ENCODE measurements at regions of chr11 and their contacts with region 1.

Region 1: DNA sequence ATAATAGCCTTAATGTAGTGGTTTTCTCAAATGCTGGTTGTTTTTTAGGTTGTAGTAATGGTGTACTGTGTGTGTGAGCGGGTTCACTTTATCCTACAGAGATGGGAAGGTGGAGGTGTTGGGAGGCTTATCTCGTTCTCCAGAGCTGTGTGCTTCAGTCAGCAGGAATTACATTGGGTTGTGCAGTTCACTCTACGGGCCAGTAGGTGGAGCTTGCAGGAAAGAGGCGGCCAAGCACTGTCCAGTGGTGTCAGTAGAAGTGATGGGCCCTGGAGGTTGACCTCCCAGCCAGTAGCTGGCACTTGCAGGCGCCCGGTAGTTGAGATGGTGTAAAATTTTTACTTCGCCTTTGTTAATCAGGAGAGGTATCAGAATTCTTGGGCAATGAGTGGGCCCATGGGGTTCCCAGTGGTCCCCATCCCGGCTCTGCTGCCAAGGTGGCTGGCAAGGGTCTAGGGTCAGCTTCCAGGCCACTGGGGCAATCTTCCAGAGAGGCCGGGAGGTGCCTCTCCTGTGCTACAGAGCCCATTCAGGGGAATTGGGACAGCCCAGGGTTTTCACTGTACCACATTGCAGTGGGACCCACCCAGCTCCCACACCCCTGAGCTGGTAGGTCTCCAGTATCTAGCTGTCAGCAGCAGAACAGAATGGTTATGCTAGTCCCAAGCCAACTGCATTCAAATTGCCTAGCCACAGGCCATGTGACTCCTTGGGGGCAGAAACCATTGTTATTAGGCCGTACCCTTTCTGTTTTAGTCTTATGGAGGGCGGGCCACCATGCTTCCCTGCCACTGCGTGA is 43.9 kb downstream of the BIRC2 start:
- DNase-seq: peak; percentile 44 to 56 (median 53)
- H3K4me3 ChIP-seq: no peak overlapping the region
- H3K4me3 Mint-ChIP-seq: no peak overlapping the region
- H3K27ac ChIP-seq: no peak overlapping the region
- H3K27ac Mint-ChIP-seq: peak overlapping the region in 6 of 7 donors; percentile 15 to 83 (median 65)
- H3K4me1 ChIP-seq: peaks cover 11% of the 10 kb centered on the region
- H3K4me1 Mint-ChIP-seq: peaks cover 17 to 40% (median 21%) of the 10 kb centered on the region in 4 donors
- H3K27me3 ChIP-seq: no peaks in the 10 kb centered on the region
- H3K27me3 Mint-ChIP-seq: no peaks in the 10 kb centered on the region

Region 2: GRCh38 chr11:102341844-102342318 is 49.0 kb before region 1 on chr11:
- CTCF ChIA-PET with region 1: interaction called, 84 read pairs
- POLR2A ChIA-PET with region 1: interaction called, 7 read pairs
- intact Hi-C with region 1: no loop called
- DNase-seq: peak; percentile 64 to 78 (median 70)
- H3K4me3 ChIP-seq: no peak overlapping the region
- H3K4me3 Mint-ChIP-seq: no peak overlapping the region
- H3K27ac ChIP-seq: peak overlapping the region; percentile 1
- H3K27ac Mint-ChIP-seq: peak overlapping the region; percentile 53 to 93 (median 77)
- H3K4me1 ChIP-seq: peaks cover 14% of the 10 kb centered on the region
- H3K4me1 Mint-ChIP-seq: peaks cover 19 to 24% (median 23%) of the 10 kb centered on the region in 4 donors
- H3K27me3 ChIP-seq: no peaks in the 10 kb centered on the region
- H3K27me3 Mint-ChIP-seq: peaks cover 0 to 1% of the 10 kb centered on the region in 2 donors

Region 3: GRCh38 chr11:102375720-102376399 is 15.0 kb before region 1 on chr11:
- CTCF ChIA-PET with region 1: interaction called, 76 read pairs
- POLR2A ChIA-PET with region 1: interaction called, 4 read pairs
- intact Hi-C with region 1: no loop called
- DNase-seq: no peak
- H3K4me3 ChIP-seq: no peak overlapping the region
- H3K4me3 Mint-ChIP-seq: no peak overlapping the region
- H3K27ac ChIP-seq: no peak overlapping the region
- H3K27ac Mint-ChIP-seq: peak overlapping the region in 3 of 7 donors; percentile 15 to 59 (median 20)
- H3K4me1 ChIP-seq: peaks cover 16% of the 10 kb centered on the region
- H3K4me1 Mint-ChIP-seq: peaks cover 15 to 27% (median 19%) of the 10 kb centered on the region in 4 donors
- H3K27me3 ChIP-seq: no peaks in the 10 kb centered on the region
- H3K27me3 Mint-ChIP-seq: no peaks in the 10 kb centered on the region

Region 4: DNA sequence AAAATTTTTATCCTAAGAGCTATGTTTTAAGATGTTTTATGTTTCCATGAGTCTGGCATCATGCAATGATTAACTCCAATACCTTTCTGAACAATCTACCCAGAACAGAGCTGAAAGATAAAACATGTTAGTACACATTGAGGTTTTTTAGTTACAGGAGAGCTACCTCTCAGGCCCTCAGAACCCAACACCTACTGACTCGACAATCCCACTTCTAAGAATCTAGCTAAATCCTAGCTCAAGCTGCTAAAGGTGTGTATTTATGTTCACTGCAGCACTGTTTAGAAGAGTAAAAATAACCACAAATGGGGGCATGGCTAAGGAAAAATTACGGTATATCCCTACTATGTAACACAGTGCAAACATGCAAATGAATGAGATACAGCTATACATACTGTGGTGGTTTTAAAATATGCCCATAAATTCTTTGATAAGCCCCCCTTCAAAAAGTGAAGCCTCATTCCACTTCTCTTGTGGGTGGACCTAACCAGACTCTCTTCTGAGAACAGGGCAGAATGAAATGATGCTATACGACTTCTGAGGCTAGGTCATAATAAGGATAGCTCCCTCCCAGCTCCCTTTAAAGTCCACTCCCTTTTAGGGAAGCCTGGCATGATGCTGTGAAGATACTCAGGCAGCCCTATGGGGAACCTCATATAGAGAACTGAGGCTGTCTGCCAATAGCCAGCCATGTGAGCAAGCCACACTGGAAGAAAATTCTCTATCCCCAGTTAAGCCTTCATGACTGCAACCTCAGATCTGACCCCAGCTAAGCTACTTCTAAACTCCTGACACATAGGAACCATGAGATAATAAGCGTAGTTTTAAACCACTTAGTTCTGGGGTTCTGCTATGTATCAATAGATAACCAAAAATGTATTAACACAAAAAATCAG is 32.2 kb after region 1 on chr11:
- CTCF ChIA-PET with region 1: interaction called, 23 read pairs
- POLR2A ChIA-PET with region 1: interaction called, 5 read pairs
- intact Hi-C with region 1: no loop called
- DNase-seq: no peak
- H3K4me3 ChIP-seq: no peak overlapping the region
- H3K4me3 Mint-ChIP-seq: peak overlapping the region in 7 of 8 donors; percentile 1 to 75 (median 24)
- H3K27ac ChIP-seq: no peak overlapping the region
- H3K27ac Mint-ChIP-seq: peak overlapping the region; percentile 52 to 88 (median 75)
- H3K4me1 ChIP-seq: peaks cover 90% of the 10 kb centered on the region
- H3K4me1 Mint-ChIP-seq: peaks cover 73 to 93% (median 82%) of the 10 kb centered on the region in 4 donors
- H3K27me3 ChIP-seq: no peaks in the 10 kb centered on the region
- H3K27me3 Mint-ChIP-seq: no peaks in the 10 kb centered on the region

Region 5: DNA sequence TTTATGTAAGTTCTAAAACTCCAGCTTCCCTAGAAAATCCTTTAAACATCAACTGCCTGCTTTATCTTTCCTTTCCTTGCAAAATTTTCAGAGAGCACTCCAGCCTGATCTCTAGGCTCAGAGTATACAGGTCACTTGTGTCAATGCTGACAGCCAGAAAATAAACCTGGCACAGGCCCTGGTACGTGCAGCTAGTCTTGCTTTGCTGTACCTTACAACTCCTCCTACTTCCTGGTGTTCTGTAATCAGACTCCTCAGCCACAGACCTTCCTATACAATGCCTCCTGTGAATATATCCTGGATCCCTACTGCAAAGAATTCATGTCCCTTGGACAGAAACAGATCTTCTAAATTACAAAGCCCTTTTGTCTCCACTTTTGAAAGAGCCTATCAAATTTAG is 85.9 kb after region 1 on chr11:
- CTCF ChIA-PET with region 1: interaction called, 35 read pairs
- POLR2A ChIA-PET with region 1: interaction called, 5 read pairs
- intact Hi-C with region 1: no loop called
- DNase-seq: peak; percentile 23 to 45 (median 24)
- H3K4me3 ChIP-seq: no peak overlapping the region
- H3K4me3 Mint-ChIP-seq: peak overlapping the region in 7 of 8 donors; percentile 44 to 72 (median 61)
- H3K27ac ChIP-seq: no peak overlapping the region
- H3K27ac Mint-ChIP-seq: peak overlapping the region; percentile 33 to 96 (median 91)
- H3K4me1 ChIP-seq: peaks cover 47% of the 10 kb centered on the region
- H3K4me1 Mint-ChIP-seq: peaks cover 29 to 62% (median 44%) of the 10 kb centered on the region in 4 donors
- H3K27me3 ChIP-seq: no peaks in the 10 kb centered on the region
- H3K27me3 Mint-ChIP-seq: no peaks in the 10 kb centered on the region

Region 6: GRCh38 chr11:102666331-102666957 is 275.6 kb after region 1 on chr11:
- CTCF ChIA-PET with region 1: interaction called, 10 read pairs
- POLR2A ChIA-PET with region 1: no interaction called
- intact Hi-C with region 1: no loop called
- DNase-seq: peak in 4 of 5 donors; percentile 30 to 37 (median 33)
- H3K4me3 ChIP-seq: no peak overlapping the region
- H3K4me3 Mint-ChIP-seq: no peak overlapping the region
- H3K27ac ChIP-seq: no peak overlapping the region
- H3K27ac Mint-ChIP-seq: no peak overlapping the region
- H3K4me1 ChIP-seq: no peaks in the 10 kb centered on the region
- H3K4me1 Mint-ChIP-seq: no peaks in the 10 kb centered on the region
- H3K27me3 ChIP-seq: no peaks in the 10 kb centered on the region
- H3K27me3 Mint-ChIP-seq: peaks cover 1 to 12% of the 10 kb centered on the region in 2 donors

Measured in CD4-positive, alpha-beta memory T cell (primary cell).